Right ventricle myocardium superior (tissue), 1 donor: ENCODE measurements at regions of chr21 and their contacts with region 1.

Region 1: GRCh38 chr21:32403201-32403777 is 9.2 kb upstream of the EVA1C start:
- DNase-seq: peak; percentile 67
- ATAC-seq: peak; percentile 92

Region 2: GRCh38 chr21:32569261-32570230 is 166.3 kb after region 1 on chr21:
- intact Hi-C with region 1: loop called (anchors 5 kb)
- DNase-seq: peak; percentile 83
- ATAC-seq: peak; percentile 96

Region 3: DNA sequence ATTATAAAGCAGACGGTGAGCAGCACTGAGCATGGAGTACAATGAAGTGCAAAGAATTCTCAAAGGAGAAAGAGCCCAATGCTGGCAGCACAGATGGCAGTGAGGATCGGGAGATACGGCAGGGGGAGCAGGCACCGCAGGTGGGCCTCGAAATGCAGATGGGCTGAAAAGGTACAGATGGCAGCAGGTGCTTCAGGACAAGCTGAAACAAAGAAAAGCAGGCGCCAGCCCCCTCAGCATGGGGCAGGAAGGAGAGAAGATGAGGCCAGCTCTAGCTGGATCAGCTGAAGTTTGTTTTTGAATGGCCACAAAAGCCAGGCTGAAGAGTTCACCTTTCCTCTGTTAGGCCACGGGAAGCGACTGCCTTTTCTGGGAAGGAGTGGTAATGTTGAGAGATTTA is 201.2 kb after region 1 on chr21:
- intact Hi-C with region 1: loop called (anchors 5 kb)
- DNase-seq: no peak
- ATAC-seq: no peak